CD4-positive, alpha-beta memory T cell (primary cell): ENCODE measurements at regions of chr12 and their contacts with region 1.

Region 1: DNA sequence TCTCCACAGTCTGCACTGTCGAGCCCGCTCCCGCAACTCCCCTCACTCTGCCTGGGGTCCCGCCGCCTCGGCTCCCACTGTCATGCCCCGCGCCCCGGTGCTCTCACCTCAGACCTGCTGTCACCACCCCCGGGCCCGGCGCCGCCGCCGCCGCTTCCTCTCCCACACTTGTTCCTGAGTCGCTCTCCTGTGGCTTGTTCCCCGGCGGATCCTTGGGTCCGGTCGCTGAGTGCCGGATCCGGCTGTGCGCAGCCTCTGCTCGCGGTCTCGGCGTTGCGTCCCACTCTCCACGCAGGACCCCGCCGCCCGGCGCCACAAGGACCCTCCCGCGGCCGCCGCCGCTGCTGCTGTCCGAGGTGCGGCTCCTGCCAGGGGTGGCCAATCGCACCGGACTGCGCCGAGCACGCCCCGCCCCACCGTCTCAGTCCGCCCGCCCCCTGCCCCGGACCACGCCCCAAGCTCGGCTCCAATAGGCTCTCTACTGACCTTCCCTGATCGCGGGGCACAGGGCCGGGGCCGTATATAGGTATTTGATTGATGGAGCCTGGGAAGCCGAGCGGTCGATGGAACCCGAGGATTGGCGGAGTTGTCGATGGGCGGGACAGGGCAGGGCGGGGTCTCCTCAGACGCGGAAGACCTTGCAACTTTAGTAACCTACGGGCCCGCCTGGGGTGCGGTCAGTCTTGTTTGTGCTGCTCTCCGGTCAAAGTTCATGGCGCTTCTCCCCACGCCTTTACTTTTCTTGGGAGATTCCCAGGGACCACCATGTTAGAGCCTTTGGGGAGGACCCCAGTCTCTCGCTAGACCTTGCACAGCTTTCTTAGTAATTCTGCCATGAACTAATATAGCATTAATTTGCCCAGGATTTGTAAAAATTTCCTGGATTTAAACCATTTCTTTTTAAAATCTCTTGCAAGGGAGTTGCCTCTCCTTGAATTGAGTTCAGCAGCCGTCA is at the start of gene TAOK3:
- DNase-seq: peak; percentile 96 to 98 (median 97)
- H3K4me3 ChIP-seq: peak within 1 kb of the TSS; percentile 81 to 87
- H3K4me3 Mint-ChIP-seq: peak within 1 kb of the TSS; percentile 89 to 93 (median 92)
- H3K27ac ChIP-seq: peak within 1 kb of the TSS; percentile 68
- H3K27ac Mint-ChIP-seq: peak within 1 kb of the TSS; percentile 93 to 100 (median 96)
- H3K4me1 ChIP-seq: peaks cover 46% of the 10 kb centered on the region
- H3K4me1 Mint-ChIP-seq: peaks cover 25 to 68% (median 45%) of the 10 kb centered on the region in 4 donors
- H3K27me3 ChIP-seq: no peaks in the 10 kb centered on the region
- H3K27me3 Mint-ChIP-seq: no peaks in the 10 kb centered on the region
- total RNA-seq, gene TAOK3: 74.8 to 76.0 TPM

Region 2: GRCh38 chr12:117190210-117190781 is 1182.5 kb before region 1 on chr12 and contains the start of gene FBXO21:
- CTCF ChIA-PET with region 1: no interaction called
- POLR2A ChIA-PET with region 1: no interaction called
- intact Hi-C with region 1: loop called (anchors 5 kb)
- DNase-seq: peak; percentile 92 to 96 (median 93)
- H3K4me3 ChIP-seq: peak within 1 kb of the TSS; percentile 66 to 81
- H3K4me3 Mint-ChIP-seq: peak within 1 kb of the TSS; percentile 94 to 99 (median 96)
- H3K27ac ChIP-seq: peak within 1 kb of the TSS; percentile 67
- H3K27ac Mint-ChIP-seq: peak within 1 kb of the TSS; percentile 89 to 97 (median 95)
- H3K4me1 ChIP-seq: peaks cover 26% of the 10 kb centered on the region
- H3K4me1 Mint-ChIP-seq: peaks cover 19 to 50% (median 29%) of the 10 kb centered on the region in 4 donors
- H3K27me3 ChIP-seq: no peaks in the 10 kb centered on the region
- H3K27me3 Mint-ChIP-seq: no peaks in the 10 kb centered on the region
- total RNA-seq, gene FBXO21: 41.9 to 47.8 TPM

Region 3: GRCh38 chr12:117919479-117919878 is 453.3 kb before region 1 on chr12:
- CTCF ChIA-PET with region 1: no interaction called
- POLR2A ChIA-PET with region 1: no interaction called
- intact Hi-C with region 1: no loop called
- DNase-seq: no peak
- H3K4me3 ChIP-seq: no peak overlapping the region
- H3K4me3 Mint-ChIP-seq: no peak overlapping the region
- H3K27ac ChIP-seq: no peak overlapping the region
- H3K27ac Mint-ChIP-seq: no peak overlapping the region
- H3K4me1 ChIP-seq: no peaks in the 10 kb centered on the region
- H3K4me1 Mint-ChIP-seq: no peaks in the 10 kb centered on the region
- H3K27me3 ChIP-seq: no peaks in the 10 kb centered on the region
- H3K27me3 Mint-ChIP-seq: peaks cover 5 to 11% of the 10 kb centered on the region in 2 donors

Region 4: GRCh38 chr12:118061011-118061875 is 311.6 kb before region 1 on chr12 and contains the start of gene WSB2:
- CTCF ChIA-PET with region 1: interaction called, 11 read pairs
- POLR2A ChIA-PET with region 1: interaction called, 11 read pairs
- intact Hi-C with region 1: loop called (anchors 1 kb)
- DNase-seq: peak; percentile 34 to 57 (median 42)
- H3K4me3 ChIP-seq: peak within 1 kb of the TSS; percentile 84 to 96
- H3K4me3 Mint-ChIP-seq: peak within 1 kb of the TSS; percentile 92 to 98 (median 96)
- H3K27ac ChIP-seq: peak within 1 kb of the TSS; percentile 81
- H3K27ac Mint-ChIP-seq: peak within 1 kb of the TSS; percentile 92 to 97 (median 96)
- H3K4me1 ChIP-seq: peaks cover 53% of the 10 kb centered on the region
- H3K4me1 Mint-ChIP-seq: peaks cover 26 to 66% (median 46%) of the 10 kb centered on the region in 4 donors
- H3K27me3 ChIP-seq: no peaks in the 10 kb centered on the region
- H3K27me3 Mint-ChIP-seq: no peaks in the 10 kb centered on the region
- total RNA-seq, gene WSB2: 24.4 to 31.5 TPM

Region 5: GRCh38 chr12:118164798-118165486 is 207.9 kb before region 1 on chr12:
- CTCF ChIA-PET with region 1: interaction called, 22 read pairs
- POLR2A ChIA-PET with region 1: interaction called, 4 read pairs
- intact Hi-C with region 1: no loop called
- DNase-seq: no peak
- H3K4me3 ChIP-seq: no peak overlapping the region
- H3K4me3 Mint-ChIP-seq: no peak overlapping the region
- H3K27ac ChIP-seq: no peak overlapping the region
- H3K27ac Mint-ChIP-seq: peak overlapping the region in 4 of 7 donors; percentile 46 to 59 (median 52)
- H3K4me1 ChIP-seq: no peaks in the 10 kb centered on the region
- H3K4me1 Mint-ChIP-seq: peaks cover 9 to 12% (median 10%) of the 10 kb centered on the region in 4 donors
- H3K27me3 ChIP-seq: no peaks in the 10 kb centered on the region
- H3K27me3 Mint-ChIP-seq: no peaks in the 10 kb centered on the region

Region 6: DNA sequence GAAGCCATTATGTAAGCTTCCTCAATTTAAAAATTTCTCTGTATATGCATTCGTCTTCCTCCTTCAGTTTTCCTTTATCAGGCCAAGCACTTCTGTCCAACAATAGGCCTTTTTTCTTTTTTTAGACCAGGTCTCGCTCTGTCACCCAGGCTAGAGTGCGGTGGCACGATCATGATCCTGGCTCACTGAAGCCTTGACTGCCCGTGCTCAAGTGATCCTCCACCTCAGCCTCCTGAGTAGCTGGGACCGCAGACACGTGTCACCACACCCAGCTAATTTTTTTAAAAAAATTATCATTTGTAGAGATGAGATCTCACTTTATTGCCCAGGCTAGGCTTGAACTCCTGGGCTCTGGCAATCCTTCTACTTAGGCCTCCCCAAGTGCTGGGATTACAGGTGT is 25.9 kb before region 1 on chr12:
- CTCF ChIA-PET with region 1: interaction called, 23 read pairs
- POLR2A ChIA-PET with region 1: interaction called, 4 read pairs
- intact Hi-C with region 1: no loop called
- DNase-seq: no peak
- H3K4me3 ChIP-seq: no peak overlapping the region
- H3K4me3 Mint-ChIP-seq: peak overlapping the region in 2 of 8 donors; percentile 3 to 24
- H3K27ac ChIP-seq: no peak overlapping the region
- H3K27ac Mint-ChIP-seq: peak overlapping the region in 4 of 7 donors; percentile 17 to 92 (median 33)
- H3K4me1 ChIP-seq: peaks cover 22% of the 10 kb centered on the region
- H3K4me1 Mint-ChIP-seq: peaks cover 33 to 49% (median 41%) of the 10 kb centered on the region in 4 donors
- H3K27me3 ChIP-seq: no peaks in the 10 kb centered on the region
- H3K27me3 Mint-ChIP-seq: no peaks in the 10 kb centered on the region

Region 7: DNA sequence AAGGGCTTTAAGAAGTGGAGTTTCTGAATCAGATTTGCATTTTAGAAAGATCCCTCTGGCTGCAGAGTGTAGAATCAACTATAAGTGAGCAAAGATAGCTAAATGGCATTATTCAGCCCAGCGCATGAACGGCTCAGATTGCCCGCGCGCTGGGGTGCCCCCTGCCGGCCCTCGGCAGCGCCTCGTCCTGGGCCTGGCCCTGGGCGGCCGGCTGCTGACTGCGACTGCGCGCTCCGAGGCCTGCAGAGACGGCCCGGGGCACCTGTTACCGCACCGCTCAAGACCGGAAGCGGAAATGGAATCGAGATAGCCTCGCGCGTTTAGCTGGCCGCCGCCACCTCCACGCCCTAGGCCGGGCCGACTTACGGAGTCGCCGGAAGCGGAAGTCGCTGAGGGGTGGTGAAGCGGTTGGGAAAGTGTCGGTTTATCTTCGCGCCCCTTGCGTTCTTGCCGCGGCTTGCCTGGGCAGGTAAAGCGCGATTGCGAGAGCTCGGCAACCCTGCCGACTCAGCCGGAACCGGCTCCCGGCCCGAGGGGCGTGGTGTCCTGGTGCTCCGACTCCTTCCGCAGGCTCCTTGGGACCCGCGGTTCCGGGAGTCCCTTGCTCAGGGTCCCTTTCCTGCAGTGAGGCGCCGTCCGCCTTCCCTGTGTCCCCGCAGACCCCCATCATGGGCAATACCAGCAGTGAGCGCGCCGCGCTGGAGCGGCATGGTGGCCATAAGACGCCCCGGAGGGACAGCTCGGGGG is 1294.9 kb after region 1 on chr12 and contains the start of gene PRKAB1:
- CTCF ChIA-PET with region 1: interaction called, 3 read pairs
- POLR2A ChIA-PET with region 1: no interaction called
- intact Hi-C with region 1: loop called (anchors 2 kb)
- DNase-seq: peak; percentile 94 to 97 (median 96)
- H3K4me3 ChIP-seq: peak within 1 kb of the TSS; percentile 67 to 98
- H3K4me3 Mint-ChIP-seq: peak within 1 kb of the TSS; percentile 88 to 93 (median 90)
- H3K27ac ChIP-seq: peak within 1 kb of the TSS; percentile 78
- H3K27ac Mint-ChIP-seq: peak within 1 kb of the TSS; percentile 88 to 95 (median 93)
- H3K4me1 ChIP-seq: peaks cover 53% of the 10 kb centered on the region
- H3K4me1 Mint-ChIP-seq: peaks cover 30 to 67% (median 47%) of the 10 kb centered on the region in 4 donors
- H3K27me3 ChIP-seq: no peaks in the 10 kb centered on the region
- H3K27me3 Mint-ChIP-seq: no peaks in the 10 kb centered on the region
- total RNA-seq, gene PRKAB1: 43.4 to 47.6 TPM